Ascending aorta (tissue), 2 donors: ENCODE measurements at regions of chr3 and their contacts with region 1.

Region 1: DNA sequence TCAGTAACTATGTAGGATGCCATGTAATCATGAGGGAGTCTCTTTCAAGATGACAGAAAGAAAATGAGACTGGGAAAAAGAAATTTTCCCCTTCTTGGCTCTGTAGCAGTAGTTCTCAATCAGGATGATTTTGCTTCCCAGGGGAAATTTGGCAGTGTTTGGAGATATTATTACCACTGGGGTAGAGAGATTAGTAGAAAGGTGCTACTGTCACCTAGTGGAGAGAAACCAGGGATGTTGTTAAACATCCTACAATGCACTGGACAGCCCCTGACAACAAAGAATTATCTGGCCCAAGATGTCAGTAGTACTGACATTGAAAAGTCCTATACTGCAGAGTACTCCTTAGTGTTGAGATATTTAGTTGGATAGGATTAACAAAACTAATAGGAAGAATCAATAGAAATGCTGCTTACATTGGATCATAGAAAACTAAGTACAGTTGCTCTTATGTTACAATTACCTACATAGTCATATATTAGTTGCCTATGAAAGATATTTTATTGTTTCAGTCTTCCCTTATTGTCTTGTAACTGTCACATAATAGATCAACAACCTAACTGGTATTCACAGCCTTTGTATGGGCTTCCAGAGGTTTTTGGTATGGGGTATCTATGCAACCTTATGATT is 433.3 kb downstream of the RAP2B start:
- DNase-seq: no peak
- H3K4me3 ChIP-seq: no peak overlapping the region
- H3K27ac ChIP-seq: no peak overlapping the region
- H3K4me1 ChIP-seq: no peaks in the 10 kb centered on the region
- H3K27me3 ChIP-seq: no peaks in the 10 kb centered on the region
- CTCF ChIP-seq: peak in 2 of 3 experiments; percentile 28 to 51

Region 2: GRCh38 chr3:153572654-153573053 is 22.6 kb before region 1 on chr3:
- intact Hi-C with region 1: loop called (anchors 2 kb)
- DNase-seq: no peak
- H3K4me3 ChIP-seq: no peak overlapping the region
- H3K27ac ChIP-seq: no peak overlapping the region
- H3K4me1 ChIP-seq: no peaks in the 10 kb centered on the region
- H3K27me3 ChIP-seq: no peaks in the 10 kb centered on the region
- CTCF ChIP-seq: no peak